GM10248 (cell line): ENCODE measurements at regions of chr1 and their contacts with region 1.

Region 1: DNA sequence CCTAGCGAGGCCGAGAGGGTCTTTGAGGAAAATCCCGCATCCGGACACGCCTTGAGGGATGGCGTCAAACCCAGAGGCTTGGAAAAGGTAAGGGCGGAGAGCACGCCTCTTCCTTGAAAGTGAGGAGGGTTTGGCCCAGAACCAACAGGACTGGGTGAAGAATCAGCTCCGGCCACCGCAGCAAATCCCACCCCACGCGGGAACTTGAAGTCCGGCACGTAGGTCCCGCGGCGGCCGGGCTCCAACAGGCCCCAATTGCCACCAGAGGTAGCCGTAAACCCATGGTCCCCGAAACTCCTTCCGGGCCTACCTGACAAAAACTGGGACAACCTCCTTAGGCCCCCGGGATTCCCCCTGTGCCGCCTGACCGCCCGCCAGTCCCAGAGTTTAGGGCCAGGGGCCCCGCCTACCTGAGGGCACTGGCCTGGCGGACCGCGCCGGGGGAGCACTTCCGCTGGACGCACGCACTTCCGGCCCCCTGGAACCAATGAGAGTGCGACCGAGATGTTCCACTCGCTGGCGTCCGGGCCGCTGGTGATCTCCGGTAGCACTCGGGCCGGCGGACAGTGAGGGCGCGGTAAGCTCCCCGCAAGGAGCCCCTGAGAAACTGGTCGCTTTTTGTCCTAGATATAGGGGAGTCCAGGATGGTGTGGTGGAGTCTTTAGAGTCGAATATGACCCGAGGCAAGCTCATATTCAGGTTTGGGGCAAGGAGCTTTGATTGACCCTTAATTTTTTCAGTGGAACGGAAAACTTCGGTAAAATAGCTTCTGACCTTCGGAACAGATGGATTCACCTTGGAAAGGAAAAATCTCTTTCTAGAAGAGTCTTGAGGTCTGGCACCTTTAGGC is at the starts of genes LZIC and NMNAT1:
- DNase-seq: peak; percentile 95
- CTCF ChIP-seq: no peak

Region 2: DNA sequence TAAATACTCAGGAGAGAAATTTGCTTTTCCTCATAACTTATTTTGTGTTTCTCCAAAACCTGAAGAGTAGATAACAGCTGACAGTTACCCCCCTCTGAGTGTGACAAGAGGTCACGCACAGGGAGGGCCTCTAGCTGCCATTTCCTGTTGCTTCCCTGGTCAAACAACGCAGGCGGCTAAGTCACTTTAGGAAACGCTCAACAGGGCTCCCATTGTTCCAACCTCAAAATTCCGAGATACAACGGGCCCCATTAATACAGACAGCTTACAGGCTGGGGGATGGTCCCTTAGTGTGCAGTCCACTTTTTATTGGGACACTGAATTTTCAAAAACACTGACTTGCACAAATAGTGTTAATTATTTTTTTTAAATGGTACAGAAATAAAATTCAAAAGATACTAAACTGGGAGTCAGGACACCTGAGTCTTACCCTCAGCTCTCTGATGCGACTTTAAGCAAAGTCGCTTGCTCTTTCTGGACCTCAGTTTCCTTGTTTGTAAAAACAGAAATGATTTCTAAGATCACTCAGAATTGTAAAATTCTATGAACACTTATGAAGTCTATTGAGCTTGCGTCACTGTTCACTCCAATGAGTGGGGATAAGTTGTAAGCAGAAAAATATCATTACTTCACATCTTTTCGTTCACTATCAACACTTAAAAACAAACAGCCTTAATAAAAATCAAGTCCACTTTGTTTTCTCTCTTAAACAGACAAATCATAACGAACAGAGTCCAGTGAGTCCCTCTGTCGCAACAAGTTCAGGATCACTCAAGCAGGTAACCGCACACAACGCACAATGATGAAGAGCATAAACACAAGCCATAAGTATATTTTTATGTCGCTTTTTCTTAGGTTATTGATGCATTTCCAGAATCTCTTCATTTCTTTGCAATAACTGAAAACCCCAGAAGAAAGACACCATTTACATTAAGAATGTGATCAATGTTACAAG is 13.5 kb before region 1 on chr1:
- CTCF ChIA-PET with region 1: interaction called, 15 read pairs
- POLR2A ChIA-PET with region 1: interaction called, 9 read pairs
- DNase-seq: no peak
- CTCF ChIP-seq: no peak